ENCODE measurements at regions of chr2 and their contacts with region 1.

Region 1: GRCh38 chr2:239991689-239992314 is 33.3 kb downstream of the NDUFA10 start:
- DNase-seq: peak; percentile 57
- H3K4me3 Mint-ChIP-seq: no peak overlapping the region
- H3K27ac Mint-ChIP-seq: no peak overlapping the region
- H3K4me1 Mint-ChIP-seq: no peaks in the 10 kb centered on the region
- H3K27me3 Mint-ChIP-seq: no peaks in the 10 kb centered on the region
- CTCF ChIP-seq: peak; percentile 82

Region 2: GRCh38 chr2:239035361-239036078 is 956.3 kb before region 1 on chr2:
- CTCF ChIA-PET with region 1: no interaction called
- POLR2A ChIA-PET with region 1: no interaction called
- intact Hi-C with region 1: loop called (anchors 10 kb)
- DNase-seq: peak; percentile 30
- H3K4me3 Mint-ChIP-seq: no peak overlapping the region
- H3K27ac Mint-ChIP-seq: no peak overlapping the region
- H3K4me1 Mint-ChIP-seq: no peaks in the 10 kb centered on the region
- H3K27me3 Mint-ChIP-seq: peaks cover 27% of the 10 kb centered on the region
- CTCF ChIP-seq: peak; percentile 84

Region 3: GRCh38 chr2:239267288-239267951 is 724.4 kb before region 1 on chr2:
- CTCF ChIA-PET with region 1: interaction called, 4 read pairs
- POLR2A ChIA-PET with region 1: no interaction called
- intact Hi-C with region 1: loop called (anchors 2 kb)
- DNase-seq: peak; percentile 91
- H3K4me3 Mint-ChIP-seq: peak overlapping the region; percentile 12
- H3K27ac Mint-ChIP-seq: peak overlapping the region; percentile 46
- H3K4me1 Mint-ChIP-seq: peaks cover 40% of the 10 kb centered on the region
- H3K27me3 Mint-ChIP-seq: no peaks in the 10 kb centered on the region
- CTCF ChIP-seq: peak; percentile 35

Region 4: DNA sequence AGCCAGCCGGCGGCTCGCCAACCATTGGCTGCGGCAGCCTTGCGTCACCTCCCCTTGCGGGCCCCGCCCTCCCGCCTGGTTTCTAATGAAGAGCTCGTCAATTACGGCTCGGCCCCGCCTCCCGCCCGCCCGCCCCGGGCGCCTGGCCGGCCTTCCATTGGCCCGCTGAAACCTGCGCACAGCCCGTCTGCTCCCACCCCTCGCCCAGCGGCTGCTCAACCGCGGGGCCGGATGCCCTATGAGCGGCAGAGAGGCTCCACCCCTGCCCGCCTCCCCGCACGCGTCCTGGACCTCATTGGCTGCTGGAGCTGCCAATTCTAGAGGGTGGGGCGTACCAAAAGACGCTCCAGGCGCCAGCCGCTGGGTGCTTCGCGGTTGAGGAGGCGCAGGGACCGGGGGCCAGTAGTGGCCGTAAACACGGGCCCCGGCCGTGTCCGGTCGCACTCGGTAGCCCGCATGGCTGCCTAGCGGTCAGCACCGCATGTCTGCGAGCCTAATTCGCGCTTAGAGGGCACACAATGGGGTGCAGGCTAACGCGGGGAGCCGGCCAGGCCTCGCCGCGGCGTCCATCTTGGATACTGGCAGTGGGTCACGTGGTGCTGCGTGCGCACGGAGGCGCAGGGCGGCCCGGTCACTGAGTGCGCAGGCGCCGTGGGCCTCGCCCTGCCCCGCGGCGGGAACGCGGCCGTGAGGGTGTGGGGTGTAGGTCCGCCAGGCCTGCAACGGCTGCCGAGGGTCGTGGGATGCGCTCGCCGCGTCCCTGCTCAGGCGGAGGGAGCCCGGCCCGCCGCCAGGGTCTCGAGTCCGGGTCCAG is 590.5 kb before region 1 on chr2:
- CTCF ChIA-PET with region 1: interaction called, 6 read pairs
- POLR2A ChIA-PET with region 1: no interaction called
- intact Hi-C with region 1: loop called (anchors 5 kb)
- DNase-seq: peak; percentile 98
- H3K4me3 Mint-ChIP-seq: peak overlapping the region; percentile 83
- H3K27ac Mint-ChIP-seq: peak overlapping the region; percentile 100
- H3K4me1 Mint-ChIP-seq: peaks cover 12% of the 10 kb centered on the region
- H3K27me3 Mint-ChIP-seq: no peaks in the 10 kb centered on the region
- CTCF ChIP-seq: no peak

Region 5: GRCh38 chr2:239644011-239644410 is 347.8 kb before region 1 on chr2:
- CTCF ChIA-PET with region 1: no interaction called
- POLR2A ChIA-PET with region 1: no interaction called
- intact Hi-C with region 1: no loop called
- DNase-seq: peak; percentile 23
- H3K4me3 Mint-ChIP-seq: no peak overlapping the region
- H3K27ac Mint-ChIP-seq: no peak overlapping the region
- H3K4me1 Mint-ChIP-seq: no peaks in the 10 kb centered on the region
- H3K27me3 Mint-ChIP-seq: peaks cover 32% of the 10 kb centered on the region
- CTCF ChIP-seq: no peak

Region 6: DNA sequence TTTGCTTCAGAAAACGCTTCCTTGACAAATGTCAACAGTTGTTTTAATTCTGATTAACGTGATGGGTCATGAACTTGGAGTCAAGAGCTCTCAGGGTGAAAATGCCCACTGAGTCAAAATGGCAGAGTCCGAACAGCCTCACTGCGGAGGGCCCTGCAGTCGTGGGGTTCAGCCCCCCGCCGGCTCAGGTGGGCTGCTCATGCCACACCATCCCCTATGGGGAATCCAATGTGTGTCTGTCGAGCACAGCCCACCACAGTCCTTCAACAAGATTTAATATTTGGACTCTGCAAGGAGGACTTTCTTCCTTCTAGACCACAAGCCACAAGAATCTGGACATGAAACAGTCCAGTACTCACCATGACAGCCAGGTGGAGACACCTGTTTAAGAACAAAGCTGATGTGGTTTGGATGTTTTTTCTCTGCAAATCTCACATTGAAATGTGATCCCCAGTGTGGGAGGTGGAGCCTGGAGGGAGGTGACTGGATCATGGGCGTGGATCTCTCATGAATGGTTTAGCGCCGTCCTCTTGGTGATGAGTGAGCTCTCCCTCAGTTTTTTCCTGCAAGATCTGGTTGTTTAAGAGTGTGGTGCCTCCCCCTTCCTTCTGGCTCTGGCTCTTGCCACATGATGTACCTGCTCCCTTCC is 167.6 kb before region 1 on chr2:
- CTCF ChIA-PET with region 1: interaction called, 26 read pairs
- POLR2A ChIA-PET with region 1: no interaction called
- intact Hi-C with region 1: no loop called
- DNase-seq: peak; percentile 89
- H3K4me3 Mint-ChIP-seq: no peak overlapping the region
- H3K27ac Mint-ChIP-seq: no peak overlapping the region
- H3K4me1 Mint-ChIP-seq: peaks cover 6% of the 10 kb centered on the region
- H3K27me3 Mint-ChIP-seq: peaks cover 44% of the 10 kb centered on the region
- CTCF ChIP-seq: peak; percentile 54

Region 7: GRCh38 chr2:239889641-239890121 is 102.1 kb before region 1 on chr2:
- CTCF ChIA-PET with region 1: interaction called, 3 read pairs
- POLR2A ChIA-PET with region 1: no interaction called
- intact Hi-C with region 1: loop called (anchors 5 kb)
- DNase-seq: no peak
- H3K4me3 Mint-ChIP-seq: no peak overlapping the region
- H3K27ac Mint-ChIP-seq: no peak overlapping the region
- H3K4me1 Mint-ChIP-seq: no peaks in the 10 kb centered on the region
- H3K27me3 Mint-ChIP-seq: peaks cover 66% of the 10 kb centered on the region
- CTCF ChIP-seq: no peak

Region 8: GRCh38 chr2:240002983-240003382 is 11.2 kb after region 1 on chr2:
- CTCF ChIA-PET with region 1: interaction called, 16 read pairs
- POLR2A ChIA-PET with region 1: no interaction called
- intact Hi-C with region 1: no loop called
- DNase-seq: no peak
- H3K4me3 Mint-ChIP-seq: no peak overlapping the region
- H3K27ac Mint-ChIP-seq: no peak overlapping the region
- H3K4me1 Mint-ChIP-seq: no peaks in the 10 kb centered on the region
- H3K27me3 Mint-ChIP-seq: no peaks in the 10 kb centered on the region
- CTCF ChIP-seq: no peak

Region 9: DNA sequence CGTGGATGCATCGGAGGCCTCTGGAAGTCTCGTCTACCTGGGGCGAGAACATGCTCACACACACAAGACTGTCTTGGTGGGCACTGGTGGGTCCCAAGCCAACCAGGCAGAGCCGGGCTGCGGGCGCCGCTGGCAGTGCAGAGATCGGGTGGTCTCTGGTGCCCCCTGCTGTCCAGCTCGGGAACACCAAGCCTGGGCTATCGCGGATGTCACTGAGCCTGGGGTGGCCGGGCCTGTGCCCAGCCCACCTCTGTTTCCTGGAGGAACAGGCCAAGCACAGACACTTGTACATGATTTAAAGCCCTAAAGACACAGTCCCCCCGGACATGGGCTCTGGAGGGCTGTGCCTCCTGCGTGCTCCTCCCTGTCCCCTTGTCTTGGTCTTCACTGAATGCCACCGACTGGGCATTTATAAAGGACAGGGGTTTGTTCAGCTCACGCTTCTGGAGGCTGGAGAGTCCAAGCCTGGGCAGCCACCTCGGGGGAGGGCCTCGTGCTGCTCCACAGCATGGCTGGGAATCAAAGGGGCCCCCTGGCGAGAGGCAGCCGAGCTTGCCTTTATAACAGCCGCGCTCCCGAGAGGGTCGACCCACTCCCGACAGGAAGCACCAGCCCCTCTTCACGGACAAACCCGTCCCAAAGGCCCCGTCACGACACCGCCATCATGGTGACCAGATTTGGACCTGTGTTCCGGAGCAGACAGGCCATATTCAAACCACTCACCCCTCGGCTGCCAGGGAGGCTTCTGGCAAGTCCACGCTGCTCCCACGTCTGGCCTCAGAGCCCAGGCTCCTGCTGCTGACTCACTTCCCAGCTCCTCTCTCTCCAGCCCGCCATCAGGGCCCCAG is 152.2 kb after region 1 on chr2:
- CTCF ChIA-PET with region 1: no interaction called
- POLR2A ChIA-PET with region 1: no interaction called
- intact Hi-C with region 1: no loop called
- DNase-seq: peak; percentile 50
- H3K4me3 Mint-ChIP-seq: no peak overlapping the region
- H3K27ac Mint-ChIP-seq: no peak overlapping the region
- H3K4me1 Mint-ChIP-seq: no peaks in the 10 kb centered on the region
- H3K27me3 Mint-ChIP-seq: peaks cover 24% of the 10 kb centered on the region
- CTCF ChIP-seq: peak; percentile 95

Measured in MCF 10A (cell line).